Activated CD4-positive, alpha-beta memory T cell treated with anti-CD3 and anti-CD28 coated beads for 36 hours (primary cell): ENCODE measurements at regions of chr2 and their contacts with region 1.

Region 1: GRCh38 chr2:238684362-238685326 is 163.2 kb upstream of the TWIST2 start:
- DNase-seq: peak; percentile 31
- H3K4me3 Mint-ChIP-seq: no peak overlapping the region
- H3K27ac Mint-ChIP-seq: no peak overlapping the region
- H3K4me1 Mint-ChIP-seq: peaks cover 9% of the 10 kb centered on the region
- H3K27me3 Mint-ChIP-seq: peaks cover 38% of the 10 kb centered on the region

Region 2: GRCh38 chr2:238670111-238670585 is 14.5 kb before region 1 on chr2:
- CTCF ChIA-PET with region 1: no interaction called
- POLR2A ChIA-PET with region 1: no interaction called
- intact Hi-C with region 1: loop called (anchors 1 kb)
- DNase-seq: peak; percentile 49
- H3K4me3 Mint-ChIP-seq: no peak overlapping the region
- H3K27ac Mint-ChIP-seq: no peak overlapping the region
- H3K4me1 Mint-ChIP-seq: peaks cover 4% of the 10 kb centered on the region
- H3K27me3 Mint-ChIP-seq: peaks cover 16% of the 10 kb centered on the region

Region 3: DNA sequence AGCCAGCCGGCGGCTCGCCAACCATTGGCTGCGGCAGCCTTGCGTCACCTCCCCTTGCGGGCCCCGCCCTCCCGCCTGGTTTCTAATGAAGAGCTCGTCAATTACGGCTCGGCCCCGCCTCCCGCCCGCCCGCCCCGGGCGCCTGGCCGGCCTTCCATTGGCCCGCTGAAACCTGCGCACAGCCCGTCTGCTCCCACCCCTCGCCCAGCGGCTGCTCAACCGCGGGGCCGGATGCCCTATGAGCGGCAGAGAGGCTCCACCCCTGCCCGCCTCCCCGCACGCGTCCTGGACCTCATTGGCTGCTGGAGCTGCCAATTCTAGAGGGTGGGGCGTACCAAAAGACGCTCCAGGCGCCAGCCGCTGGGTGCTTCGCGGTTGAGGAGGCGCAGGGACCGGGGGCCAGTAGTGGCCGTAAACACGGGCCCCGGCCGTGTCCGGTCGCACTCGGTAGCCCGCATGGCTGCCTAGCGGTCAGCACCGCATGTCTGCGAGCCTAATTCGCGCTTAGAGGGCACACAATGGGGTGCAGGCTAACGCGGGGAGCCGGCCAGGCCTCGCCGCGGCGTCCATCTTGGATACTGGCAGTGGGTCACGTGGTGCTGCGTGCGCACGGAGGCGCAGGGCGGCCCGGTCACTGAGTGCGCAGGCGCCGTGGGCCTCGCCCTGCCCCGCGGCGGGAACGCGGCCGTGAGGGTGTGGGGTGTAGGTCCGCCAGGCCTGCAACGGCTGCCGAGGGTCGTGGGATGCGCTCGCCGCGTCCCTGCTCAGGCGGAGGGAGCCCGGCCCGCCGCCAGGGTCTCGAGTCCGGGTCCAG is 716.6 kb after region 1 on chr2:
- CTCF ChIA-PET with region 1: no interaction called
- POLR2A ChIA-PET with region 1: no interaction called
- intact Hi-C with region 1: no loop called
- DNase-seq: peak; percentile 99
- H3K4me3 Mint-ChIP-seq: peak overlapping the region; percentile 89
- H3K27ac Mint-ChIP-seq: peak overlapping the region; percentile 97
- H3K4me1 Mint-ChIP-seq: peaks cover 35% of the 10 kb centered on the region
- H3K27me3 Mint-ChIP-seq: no peaks in the 10 kb centered on the region